K562 (cell line): ENCODE measurements at regions of chr12 and their contacts with region 1.

Region 1: DNA sequence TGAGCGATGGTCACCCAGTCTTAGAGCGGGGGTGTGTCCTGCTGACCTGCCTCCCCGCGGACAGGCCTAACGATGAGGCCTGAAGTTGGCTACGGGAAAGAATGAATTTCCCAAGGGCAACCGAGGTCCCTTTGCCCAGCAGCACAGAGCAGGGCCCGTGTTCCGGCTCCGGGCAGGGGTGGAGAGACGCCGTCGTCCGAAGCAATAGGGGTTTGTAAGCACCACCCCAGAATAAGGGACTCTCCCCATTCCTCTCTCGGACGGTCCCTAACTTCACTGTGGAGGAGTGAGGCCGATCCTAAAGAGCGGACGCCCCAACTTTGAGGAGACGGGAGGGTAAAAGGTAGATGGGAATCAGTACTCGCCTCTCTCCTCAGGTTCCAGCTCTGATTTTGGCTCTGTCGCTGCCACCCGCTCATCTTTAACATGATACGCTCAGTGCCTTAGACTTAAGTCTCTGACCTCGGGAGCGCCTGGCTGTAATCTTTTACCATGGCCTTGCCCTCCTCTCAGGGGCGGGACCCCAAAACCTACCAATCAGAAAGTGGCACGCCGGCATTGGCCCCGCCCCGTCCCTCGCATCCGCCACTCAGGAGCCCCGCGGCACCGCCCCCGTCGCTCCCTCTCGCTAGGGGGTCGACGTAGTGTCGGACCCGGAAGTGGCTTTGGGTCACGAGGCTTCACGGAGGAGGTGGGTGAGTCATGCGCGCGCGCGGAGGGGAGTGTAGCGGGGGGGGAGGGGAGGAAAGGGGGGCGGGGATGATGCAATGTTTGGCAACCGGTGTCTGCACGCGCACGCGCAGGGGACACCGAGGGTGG is at the start of gene DDIT3:
- DNase-seq: peak; percentile 94 to 99 (median 96)
- ATAC-seq: peak; percentile 67
- H3K4me3 ChIP-seq: peak within 1 kb of the TSS; percentile 86
- H3K27ac ChIP-seq: peak within 1 kb of the TSS; percentile 99
- H3K4me1 ChIP-seq: peaks cover 34 to 48% of the 10 kb centered on the region in 2 experiments
- H3K27me3 ChIP-seq: no peaks in the 10 kb centered on the region
- CTCF ChIP-seq: 0 out of 6 replicates have a peak, but pooled peaks of 1 of the 3 experiments have one; percentile 1
- EP300 ChIP-seq: no peak
- POLR2A ChIP-seq: peak; percentile 100
- RAD21 ChIP-seq: no peak
- polyA plus RNA-seq, gene DDIT3: 254 to 272 TPM

Region 2: GRCh38 chr12:57151741-57152630 is 368.3 kb before region 1 on chr12:
- CTCF ChIA-PET with region 1: no interaction called
- POLR2A ChIA-PET with region 1: no interaction called
- in situ Hi-C with region 1: no loop called
- intact Hi-C with region 1: no loop called
- DNase-seq: no peak
- ATAC-seq: no peak
- H3K4me3 ChIP-seq: no peak overlapping the region
- H3K27ac ChIP-seq: no peak overlapping the region
- H3K4me1 ChIP-seq: peaks cover 11 to 14% of the 10 kb centered on the region in 2 experiments
- H3K27me3 ChIP-seq: peaks cover 3 to 8% of the 10 kb centered on the region in 2 experiments; a peak in 3 of 5 replicates
- CTCF ChIP-seq: no peak
- EP300 ChIP-seq: no peak
- POLR2A ChIP-seq: no peak
- RAD21 ChIP-seq: no peak

Region 3: GRCh38 chr12:57280211-57281062 is 239.8 kb before region 1 on chr12:
- CTCF ChIA-PET with region 1: no interaction called
- POLR2A ChIA-PET with region 1: no interaction called
- in situ Hi-C with region 1: no loop called
- intact Hi-C with region 1: no loop called
- DNase-seq: peak; percentile 68 to 89 (median 72)
- ATAC-seq: peak; percentile 96
- H3K4me3 ChIP-seq: peak overlapping the region; percentile 9; the same call in 1 of the 2 replicates
- H3K27ac ChIP-seq: peak overlapping the region; percentile 78
- H3K4me1 ChIP-seq: peaks cover 0 to 17% of the 10 kb centered on the region in 2 experiments; a peak in 4 of 5 replicates
- H3K27me3 ChIP-seq: no peaks in the 10 kb centered on the region
- CTCF ChIP-seq: no peak
- EP300 ChIP-seq: peak; percentile 61; the same call in 1 of the 2 replicates
- POLR2A ChIP-seq: peak; percentile 62
- RAD21 ChIP-seq: no peak

Region 4: DNA sequence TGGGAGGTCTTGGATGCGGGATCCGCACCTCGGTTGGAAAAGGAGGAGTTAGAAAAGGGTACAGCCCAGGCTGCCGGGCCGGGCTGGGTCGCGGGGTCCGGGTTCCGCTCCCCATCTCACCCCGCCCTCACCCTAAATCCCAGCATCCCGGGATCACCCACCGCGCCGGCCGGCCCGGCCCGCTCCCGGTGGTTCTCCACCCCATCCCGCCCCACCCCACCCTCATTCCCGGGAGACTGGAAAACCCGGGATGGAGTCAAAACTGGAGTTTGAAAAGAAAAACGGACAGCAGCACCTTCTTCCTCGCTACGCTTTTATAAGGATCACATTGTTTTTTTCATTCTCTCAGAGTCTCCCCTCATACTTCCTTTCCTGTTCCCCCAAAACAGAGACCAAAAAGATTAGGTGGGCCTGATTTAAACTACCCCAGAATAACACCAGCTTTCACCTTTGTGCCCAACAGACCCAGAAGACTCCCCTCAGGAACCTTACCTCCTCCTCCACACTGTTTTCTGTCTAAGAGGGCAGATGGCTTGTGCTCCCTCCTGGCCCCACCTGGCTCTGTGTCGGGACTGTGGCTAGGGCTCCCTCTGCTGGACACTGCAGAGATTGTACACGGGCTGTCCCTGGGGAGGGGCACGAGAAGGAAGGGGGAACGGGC is 57.9 kb before region 1 on chr12:
- CTCF ChIA-PET with region 1: no interaction called
- POLR2A ChIA-PET with region 1: interaction called, 13 read pairs
- in situ Hi-C with region 1: no loop called
- intact Hi-C with region 1: loop called (anchors 2 kb)
- DNase-seq: peak; percentile 90 to 95 (median 93)
- ATAC-seq: peak; percentile 83
- H3K4me3 ChIP-seq: peak overlapping the region; percentile 51
- H3K27ac ChIP-seq: peak overlapping the region; percentile 55
- H3K4me1 ChIP-seq: peaks cover 21 to 39% of the 10 kb centered on the region in 2 experiments; a peak in 4 of 5 replicates
- H3K27me3 ChIP-seq: peaks cover 4 to 19% of the 10 kb centered on the region in 2 experiments; a peak in 3 of 5 replicates
- CTCF ChIP-seq: peak; percentile 96 to 98 (median 97)
- EP300 ChIP-seq: no peak
- POLR2A ChIP-seq: no peak
- RAD21 ChIP-seq: peak; percentile 77 to 90

Region 5: DNA sequence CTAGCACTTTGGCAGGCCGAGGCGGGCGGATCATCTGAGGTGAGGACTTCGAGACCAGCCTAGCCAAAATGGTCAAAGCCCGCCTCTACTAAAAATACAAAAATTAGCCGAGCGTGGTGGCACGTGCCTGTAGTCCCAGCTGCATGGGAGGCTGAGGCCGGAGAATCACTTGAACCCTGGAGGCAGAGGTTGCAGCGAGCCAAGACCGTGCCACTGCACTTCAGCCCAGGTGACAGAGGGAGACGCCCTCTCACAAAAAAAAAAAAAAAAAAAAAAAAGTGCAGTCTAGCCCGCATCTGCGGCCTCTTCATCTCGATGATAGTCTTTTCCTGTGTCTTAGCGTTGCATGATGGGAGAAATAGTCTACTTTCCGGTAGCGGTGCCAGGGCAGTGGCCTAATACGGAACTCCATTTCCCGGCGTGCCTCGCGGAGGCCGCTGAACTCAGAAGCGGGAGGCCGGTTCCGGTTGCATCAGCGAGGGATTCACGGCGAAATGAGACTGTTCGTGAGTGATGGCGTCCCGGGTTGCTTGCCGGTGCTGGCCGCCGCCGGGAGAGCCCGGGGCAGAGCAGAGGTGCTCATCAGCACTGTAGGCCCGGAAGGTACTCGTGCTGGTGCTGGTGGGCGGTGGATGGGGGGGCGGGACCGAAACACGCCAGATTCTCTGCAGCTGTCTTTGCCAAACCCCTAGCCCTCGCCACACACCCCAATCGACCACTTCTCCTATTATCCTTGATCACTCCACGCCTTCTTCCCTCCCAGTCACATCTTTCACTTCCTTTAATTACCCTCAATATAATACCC is 32.5 kb before region 1 on chr12 and contains the start of gene MARS1:
- CTCF ChIA-PET with region 1: no interaction called
- POLR2A ChIA-PET with region 1: interaction called, 12 read pairs
- in situ Hi-C with region 1: no loop called
- intact Hi-C with region 1: loop called (anchors 5 kb)
- DNase-seq: peak; percentile 80 to 98 (median 86)
- ATAC-seq: peak; percentile 96
- H3K4me3 ChIP-seq: peak within 1 kb of the TSS; percentile 83
- H3K27ac ChIP-seq: peak within 1 kb of the TSS; percentile 92
- H3K4me1 ChIP-seq: peaks cover 7 to 15% of the 10 kb centered on the region in 2 experiments
- H3K27me3 ChIP-seq: no peaks in the 10 kb centered on the region
- CTCF ChIP-seq: peak; percentile 58 to 70 (median 61)
- EP300 ChIP-seq: peak; percentile 53
- POLR2A ChIP-seq: peak; percentile 90
- RAD21 ChIP-seq: peak in 1 of 2 experiments; percentile 24; a peak in 2 of 4 replicates
- polyA plus RNA-seq, gene MARS1: 117 to 168 TPM

Region 6: DNA sequence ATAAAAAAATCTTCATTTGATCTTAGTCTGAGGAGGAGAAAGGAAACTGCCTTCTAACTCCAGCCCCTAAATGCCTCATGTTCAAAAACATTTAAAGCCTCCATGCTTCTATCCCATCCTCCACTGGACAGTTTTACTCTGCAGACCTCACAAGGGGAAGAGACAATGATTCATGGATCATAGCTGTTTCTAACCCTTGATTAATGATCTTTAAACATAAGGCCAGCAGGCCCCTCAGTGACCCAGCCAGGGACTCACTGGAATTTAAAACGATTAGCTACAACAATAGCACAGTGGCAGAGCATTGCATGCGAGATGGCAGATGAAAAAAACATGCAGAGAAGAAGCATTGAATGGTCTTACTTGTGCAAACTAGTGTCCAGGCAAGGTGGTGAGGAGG is 20.7 kb after region 1 on chr12:
- CTCF ChIA-PET with region 1: no interaction called
- POLR2A ChIA-PET with region 1: interaction called, 225 read pairs
- in situ Hi-C with region 1: no loop called
- intact Hi-C with region 1: loop called (anchors 1 kb)
- DNase-seq: peak in 1 of 4 experiments; percentile 36
- ATAC-seq: no peak
- H3K4me3 ChIP-seq: no peak overlapping the region
- H3K27ac ChIP-seq: peak overlapping the region; percentile 78
- H3K4me1 ChIP-seq: peaks cover 23 to 63% of the 10 kb centered on the region in 2 experiments
- H3K27me3 ChIP-seq: no peaks in the 10 kb centered on the region
- CTCF ChIP-seq: no peak
- EP300 ChIP-seq: no peak
- POLR2A ChIP-seq: no peak
- RAD21 ChIP-seq: no peak

Region 7: DNA sequence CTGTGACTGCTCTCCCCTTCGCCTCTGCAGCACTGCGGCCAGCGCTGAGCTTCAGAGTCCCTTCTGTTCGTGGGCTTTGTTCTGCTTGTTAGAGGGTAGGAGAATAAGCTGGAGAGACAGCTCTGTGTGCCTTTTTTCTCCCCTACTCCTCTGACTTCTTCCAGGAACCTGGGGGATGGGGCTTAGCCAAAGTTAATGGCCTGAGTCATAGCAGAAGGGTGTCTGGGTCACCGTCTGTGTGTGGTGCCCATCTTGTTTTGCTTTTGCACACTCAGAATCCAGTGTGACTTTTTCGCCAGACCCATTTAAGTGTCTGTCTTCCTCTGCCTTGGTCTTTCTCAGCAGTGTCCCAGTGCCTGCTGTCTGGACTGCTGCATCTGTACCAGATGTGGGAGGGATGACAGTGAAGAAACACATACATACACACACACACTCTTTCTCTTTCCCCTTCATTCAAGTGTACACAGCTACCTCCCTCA is 32.6 kb after region 1 on chr12:
- CTCF ChIA-PET with region 1: no interaction called
- POLR2A ChIA-PET with region 1: interaction called, 38 read pairs
- in situ Hi-C with region 1: no loop called
- intact Hi-C with region 1: no loop called
- DNase-seq: peak; percentile 24 to 81 (median 51)
- ATAC-seq: peak; percentile 51
- H3K4me3 ChIP-seq: peak overlapping the region; percentile 69
- H3K27ac ChIP-seq: peak overlapping the region; percentile 90
- H3K4me1 ChIP-seq: peaks cover 50 to 63% of the 10 kb centered on the region in 2 experiments
- H3K27me3 ChIP-seq: no peaks in the 10 kb centered on the region
- CTCF ChIP-seq: no peak
- EP300 ChIP-seq: no peak
- POLR2A ChIP-seq: no peak
- RAD21 ChIP-seq: no peak

Region 8: GRCh38 chr12:57621497-57622292 is 101.4 kb after region 1 on chr12:
- CTCF ChIA-PET with region 1: no interaction called
- POLR2A ChIA-PET with region 1: interaction called, 6 read pairs
- in situ Hi-C with region 1: no loop called
- intact Hi-C with region 1: loop called (anchors 5 kb)
- DNase-seq: peak; percentile 75 to 87 (median 86)
- ATAC-seq: peak; percentile 93
- H3K4me3 ChIP-seq: peak overlapping the region; percentile 30
- H3K27ac ChIP-seq: no peak overlapping the region
- H3K4me1 ChIP-seq: peaks cover 27 to 41% of the 10 kb centered on the region in 2 experiments
- H3K27me3 ChIP-seq: no peaks in the 10 kb centered on the region
- CTCF ChIP-seq: peak; percentile 81 to 95 (median 92)
- EP300 ChIP-seq: no peak
- POLR2A ChIP-seq: no peak
- RAD21 ChIP-seq: peak; percentile 79 to 92

Region 9: DNA sequence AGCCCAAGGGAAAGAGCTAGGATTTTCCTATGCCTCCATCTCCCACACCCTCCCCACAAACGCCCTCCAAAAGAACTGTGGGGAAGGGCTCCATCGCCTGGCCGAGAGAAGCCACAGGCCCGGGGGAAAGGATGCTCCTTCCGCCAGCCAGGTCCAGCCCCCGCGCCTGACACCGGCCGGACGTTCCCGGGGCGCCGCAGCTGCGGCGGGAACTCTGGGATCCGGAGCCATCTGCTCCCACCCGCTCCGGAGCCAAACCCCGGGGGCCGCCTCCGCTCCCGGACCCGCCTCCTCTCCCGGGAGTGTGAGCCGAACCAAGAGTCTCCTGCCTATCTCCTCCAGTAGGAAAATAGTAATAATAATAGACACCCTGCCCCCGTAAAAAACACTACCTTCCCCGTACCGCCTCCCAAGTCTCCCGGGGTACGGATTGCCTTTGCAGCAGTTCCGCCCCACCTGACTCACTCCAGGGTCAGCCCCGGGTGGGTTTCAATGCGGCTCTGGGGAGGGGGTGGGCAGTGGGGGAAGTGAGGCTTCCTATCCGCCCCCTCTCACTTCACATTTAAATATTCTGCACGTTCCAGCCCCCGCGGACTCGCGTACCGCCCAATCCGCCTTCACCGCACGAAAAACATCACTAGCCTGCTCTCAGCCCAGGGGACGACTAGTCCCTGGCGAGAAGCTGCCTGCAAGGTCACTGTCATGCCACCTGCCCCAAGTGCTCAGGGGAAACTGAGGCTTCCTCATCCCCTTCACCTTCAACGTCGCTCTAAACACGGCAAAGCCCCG is 215.9 kb after region 1 on chr12:
- CTCF ChIA-PET with region 1: no interaction called
- POLR2A ChIA-PET with region 1: interaction called, 6 read pairs
- in situ Hi-C with region 1: no loop called
- intact Hi-C with region 1: loop called (anchors 5 kb)
- DNase-seq: peak; percentile 77 to 85 (median 82)
- ATAC-seq: peak; percentile 93
- H3K4me3 ChIP-seq: peak overlapping the region; percentile 38
- H3K27ac ChIP-seq: peak overlapping the region; percentile 11; the same call in 2 of the 3 replicates
- H3K4me1 ChIP-seq: peaks cover 9 to 31% of the 10 kb centered on the region in 2 experiments; a peak in 4 of 5 replicates
- H3K27me3 ChIP-seq: peaks cover 20 to 59% of the 10 kb centered on the region in 2 experiments
- CTCF ChIP-seq: peak; percentile 71 to 79 (median 79)
- EP300 ChIP-seq: no peak
- POLR2A ChIP-seq: no peak
- RAD21 ChIP-seq: peak; percentile 66 to 78

Region 10: GRCh38 chr12:57983146-57983857 is 463.0 kb after region 1 on chr12:
- CTCF ChIA-PET with region 1: no interaction called
- POLR2A ChIA-PET with region 1: no interaction called
- in situ Hi-C with region 1: no loop called
- intact Hi-C with region 1: no loop called
- DNase-seq: peak in 2 of 4 experiments; percentile 14 to 55
- ATAC-seq: peak; percentile 67; the same call in 2 of the 3 replicates
- H3K4me3 ChIP-seq: no peak overlapping the region
- H3K27ac ChIP-seq: no peak overlapping the region
- H3K4me1 ChIP-seq: no peaks in the 10 kb centered on the region
- H3K27me3 ChIP-seq: no peaks in the 10 kb centered on the region
- CTCF ChIP-seq: peak; percentile 55 to 74 (median 61); a peak in 5 of 6 replicates
- EP300 ChIP-seq: no peak
- POLR2A ChIP-seq: no peak
- RAD21 ChIP-seq: peak; percentile 79 to 87